ENCODE measurements at regions of chr2 and their contacts with region 1.

Region 1: DNA sequence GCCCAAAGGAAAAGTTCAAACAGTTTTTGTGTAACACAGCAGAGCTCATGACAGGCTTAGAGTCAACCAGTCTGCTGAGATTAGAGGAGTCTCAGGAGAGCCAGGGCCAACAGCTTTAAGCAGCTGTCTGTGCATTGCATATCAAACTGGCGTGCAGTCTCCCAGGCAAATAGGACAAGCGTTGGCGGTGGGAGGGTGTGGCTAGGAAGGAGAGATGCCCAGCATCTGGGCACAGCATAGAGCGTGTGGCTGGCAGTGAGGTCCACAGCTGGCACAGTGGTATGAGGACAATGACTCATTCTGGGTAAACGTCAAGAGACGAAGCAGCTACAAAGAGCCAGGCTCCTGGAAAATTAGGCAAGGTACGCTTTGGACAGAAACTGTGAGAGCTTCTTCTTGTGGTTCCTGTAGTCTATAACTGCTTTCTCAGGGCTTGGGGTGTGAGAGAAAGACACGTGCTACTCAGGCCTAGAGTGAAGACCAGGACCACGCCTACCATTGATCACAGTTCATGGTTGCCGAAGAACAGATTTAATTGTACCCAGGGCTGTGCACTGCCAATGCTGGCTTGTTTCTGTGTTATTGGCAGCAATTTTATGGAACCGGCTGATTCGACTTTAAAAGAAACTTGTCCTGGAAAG is 14.8 kb downstream of the ZAP70 start:
- DNase-seq: peak in 1 of 5 donors; percentile 57
- H3K4me3 ChIP-seq: no peak overlapping the region
- H3K4me3 Mint-ChIP-seq: peak overlapping the region in 6 of 8 donors; percentile 29 to 57 (median 42)
- H3K27ac ChIP-seq: peak overlapping the region; percentile 21
- H3K27ac Mint-ChIP-seq: peak overlapping the region; percentile 66 to 92 (median 75)
- H3K4me1 ChIP-seq: peaks cover 52% of the 10 kb centered on the region
- H3K4me1 Mint-ChIP-seq: peaks cover 39 to 76% (median 57%) of the 10 kb centered on the region in 4 donors
- H3K27me3 ChIP-seq: no peaks in the 10 kb centered on the region
- H3K27me3 Mint-ChIP-seq: no peaks in the 10 kb centered on the region

Region 2: GRCh38 chr2:96970248-96970875 is 757.8 kb before region 1 on chr2:
- CTCF ChIA-PET with region 1: no interaction called
- POLR2A ChIA-PET with region 1: no interaction called
- intact Hi-C with region 1: no loop called
- DNase-seq: no peak
- H3K4me3 ChIP-seq: no peak overlapping the region
- H3K4me3 Mint-ChIP-seq: no peak overlapping the region
- H3K27ac ChIP-seq: no peak overlapping the region
- H3K27ac Mint-ChIP-seq: peak overlapping the region in 1 of 7 donors; percentile 60
- H3K4me1 ChIP-seq: peaks cover 22% of the 10 kb centered on the region
- H3K4me1 Mint-ChIP-seq: peaks cover 11 to 43% (median 31%) of the 10 kb centered on the region in 4 donors
- H3K27me3 ChIP-seq: no peaks in the 10 kb centered on the region
- H3K27me3 Mint-ChIP-seq: peaks cover 0 to 1% of the 10 kb centered on the region in 2 donors

Region 3: GRCh38 chr2:97688062-97688827 is 40.0 kb before region 1 on chr2:
- CTCF ChIA-PET with region 1: no interaction called
- POLR2A ChIA-PET with region 1: no interaction called
- intact Hi-C with region 1: no loop called
- DNase-seq: no peak
- H3K4me3 ChIP-seq: no peak overlapping the region
- H3K4me3 Mint-ChIP-seq: no peak overlapping the region
- H3K27ac ChIP-seq: no peak overlapping the region
- H3K27ac Mint-ChIP-seq: peak overlapping the region in 2 of 7 donors; percentile 34 to 76
- H3K4me1 ChIP-seq: no peaks in the 10 kb centered on the region
- H3K4me1 Mint-ChIP-seq: peaks cover 4 to 9% (median 6%) of the 10 kb centered on the region in 4 donors
- H3K27me3 ChIP-seq: no peaks in the 10 kb centered on the region
- H3K27me3 Mint-ChIP-seq: no peaks in the 10 kb centered on the region

Region 4: DNA sequence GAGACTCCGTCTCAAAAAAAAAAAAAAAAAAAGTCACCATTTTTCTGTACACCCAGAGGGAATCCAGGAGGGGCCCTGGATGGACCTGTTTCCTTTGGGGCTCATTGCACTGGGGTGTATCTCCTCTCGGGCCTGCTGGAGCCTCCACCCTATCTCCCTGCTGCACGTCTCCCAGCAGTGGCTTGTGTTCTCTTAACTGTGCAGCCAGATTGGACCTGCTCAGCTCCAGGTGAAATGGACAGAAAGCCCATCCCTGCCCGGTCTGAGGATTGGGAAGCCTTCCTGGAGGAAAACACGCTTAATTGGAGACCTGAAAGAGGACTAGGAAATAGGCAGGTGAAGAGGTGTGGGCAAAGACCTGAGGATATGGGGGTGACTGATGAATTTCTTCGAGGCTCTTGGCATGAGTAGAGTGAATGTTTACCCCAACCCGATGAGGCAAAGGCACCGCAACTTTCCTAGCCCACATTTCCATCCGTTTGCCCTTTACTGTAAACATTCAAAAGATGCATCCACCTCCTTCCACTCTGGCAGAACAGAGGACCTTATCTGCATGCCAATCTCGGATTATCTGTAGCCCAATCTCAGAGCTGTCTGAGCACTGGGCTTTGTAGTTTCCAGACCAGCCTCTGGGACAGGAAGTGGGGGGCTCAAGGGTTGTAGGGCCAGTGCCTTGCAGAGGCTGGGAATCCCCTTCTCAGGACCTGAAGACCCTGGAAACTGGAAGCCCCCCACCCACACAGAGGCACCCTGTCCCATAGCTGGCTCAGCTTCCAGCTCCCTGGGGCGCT is 17.4 kb before region 1 on chr2:
- CTCF ChIA-PET with region 1: interaction called, 17 read pairs
- POLR2A ChIA-PET with region 1: interaction called, 46 read pairs
- intact Hi-C with region 1: no loop called
- DNase-seq: peak in 1 of 5 donors; percentile 71
- H3K4me3 ChIP-seq: no peak overlapping the region
- H3K4me3 Mint-ChIP-seq: peak overlapping the region in 6 of 8 donors; percentile 3 to 97 (median 16)
- H3K27ac ChIP-seq: peak overlapping the region; percentile 31
- H3K27ac Mint-ChIP-seq: peak overlapping the region; percentile 69 to 95 (median 86)
- H3K4me1 ChIP-seq: peaks cover 57% of the 10 kb centered on the region
- H3K4me1 Mint-ChIP-seq: peaks cover 34 to 60% (median 45%) of the 10 kb centered on the region in 4 donors
- H3K27me3 ChIP-seq: no peaks in the 10 kb centered on the region
- H3K27me3 Mint-ChIP-seq: no peaks in the 10 kb centered on the region

Region 5: DNA sequence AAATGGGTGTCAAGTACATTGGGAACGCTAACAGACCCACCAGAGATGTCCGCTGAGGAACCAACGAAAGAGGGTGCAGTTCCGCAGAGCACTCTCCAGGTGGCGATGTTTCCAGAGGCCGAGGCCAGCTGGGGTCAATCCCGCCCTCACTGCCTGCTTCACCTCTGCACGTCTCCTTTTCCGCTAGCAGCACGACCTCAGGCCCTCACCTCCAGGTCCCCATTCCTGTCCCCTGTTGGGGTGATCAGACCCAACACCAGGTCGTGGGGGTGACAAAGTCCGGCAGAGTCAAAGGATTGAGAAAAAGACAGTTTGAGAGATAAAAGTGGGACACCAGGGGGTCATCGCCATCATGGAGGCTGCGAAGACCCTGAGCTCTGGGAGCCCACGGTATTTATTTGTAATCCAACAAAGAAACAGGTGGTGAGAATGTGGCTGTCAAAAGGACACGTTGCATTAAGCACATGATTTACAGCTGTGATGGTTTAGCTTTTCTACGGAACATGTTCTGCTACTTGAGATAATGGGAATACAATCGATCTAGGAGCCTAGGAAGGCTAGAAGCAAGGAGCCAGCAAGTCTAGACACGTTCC is 12.5 kb after region 1 on chr2:
- CTCF ChIA-PET with region 1: interaction called, 56 read pairs
- POLR2A ChIA-PET with region 1: interaction called, 13 read pairs
- intact Hi-C with region 1: no loop called
- DNase-seq: peak in 4 of 5 donors; percentile 31 to 43 (median 34)
- H3K4me3 ChIP-seq: no peak overlapping the region
- H3K4me3 Mint-ChIP-seq: peak overlapping the region in 3 of 8 donors; percentile 20 to 61 (median 50)
- H3K27ac ChIP-seq: no peak overlapping the region
- H3K27ac Mint-ChIP-seq: peak overlapping the region; percentile 25 to 90 (median 79)
- H3K4me1 ChIP-seq: peaks cover 55% of the 10 kb centered on the region
- H3K4me1 Mint-ChIP-seq: peaks cover 42 to 77% (median 57%) of the 10 kb centered on the region in 4 donors
- H3K27me3 ChIP-seq: no peaks in the 10 kb centered on the region
- H3K27me3 Mint-ChIP-seq: no peaks in the 10 kb centered on the region

Measured in CD4-positive, alpha-beta memory T cell (primary cell).